ENCODE measurements at regions of chr20 and their contacts with region 1.

Region 1: GRCh38 chr20:44683263-44684046 is 31.7 kb upstream of the CCN5 start:
- DNase-seq: peak; percentile 67
- H3K4me3 Mint-ChIP-seq: no peak overlapping the region
- H3K27ac Mint-ChIP-seq: no peak overlapping the region
- H3K4me1 Mint-ChIP-seq: peaks cover 11% of the 10 kb centered on the region
- H3K27me3 Mint-ChIP-seq: peaks cover 3% of the 10 kb centered on the region

Region 2: DNA sequence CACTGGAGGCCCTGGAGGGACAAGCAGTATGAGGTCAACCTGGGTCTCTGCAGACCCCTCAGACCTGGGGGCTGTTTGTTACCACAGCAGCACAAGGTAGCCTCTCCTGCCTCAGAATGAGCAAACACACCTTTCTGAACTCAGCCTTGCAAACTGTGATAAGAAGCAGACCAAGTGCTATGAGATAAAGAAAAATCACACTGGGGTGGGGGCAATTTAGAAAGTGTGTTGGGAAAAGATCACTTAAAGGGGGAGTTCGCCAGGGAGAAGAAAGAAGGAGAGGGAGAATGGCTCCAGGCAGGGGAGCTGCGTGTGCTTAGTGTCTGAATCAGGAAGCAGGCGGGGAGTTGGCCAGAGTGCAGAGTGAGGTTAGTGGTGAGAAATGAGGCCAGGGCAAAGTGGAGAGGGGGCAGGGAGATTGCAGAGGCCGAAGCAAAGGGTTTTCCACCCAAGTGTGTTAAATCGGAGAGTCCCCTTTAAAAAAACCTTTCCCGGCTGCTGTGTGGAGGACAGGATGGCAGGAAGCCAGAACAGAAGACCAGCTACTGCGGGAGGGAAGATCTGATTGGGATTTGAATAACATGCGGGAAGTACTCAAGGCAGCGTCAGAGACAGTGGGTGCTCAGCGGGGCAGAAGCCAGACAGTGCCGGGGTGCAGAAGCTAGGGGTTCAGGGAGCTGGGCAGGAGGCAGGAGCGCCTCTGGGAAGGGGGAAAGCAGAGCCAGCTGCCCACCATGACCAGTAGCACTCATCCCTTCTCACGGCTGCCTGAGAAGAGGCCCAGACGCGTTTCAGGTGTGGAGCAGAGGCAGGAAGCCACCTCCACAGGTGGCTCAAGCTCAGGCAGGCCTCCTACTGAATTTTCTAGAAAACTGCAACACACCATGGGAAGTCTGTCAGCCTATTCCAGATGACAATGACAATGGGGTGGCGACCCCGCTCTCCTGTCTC is 41.0 kb before region 1 on chr20:
- CTCF ChIA-PET with region 1: interaction called, 26 read pairs
- DNase-seq: peak; percentile 39
- H3K4me3 Mint-ChIP-seq: peak overlapping the region; percentile 33
- H3K27ac Mint-ChIP-seq: peak overlapping the region; percentile 93
- H3K4me1 Mint-ChIP-seq: peaks cover 77% of the 10 kb centered on the region
- H3K27me3 Mint-ChIP-seq: no peaks in the 10 kb centered on the region

Region 3: DNA sequence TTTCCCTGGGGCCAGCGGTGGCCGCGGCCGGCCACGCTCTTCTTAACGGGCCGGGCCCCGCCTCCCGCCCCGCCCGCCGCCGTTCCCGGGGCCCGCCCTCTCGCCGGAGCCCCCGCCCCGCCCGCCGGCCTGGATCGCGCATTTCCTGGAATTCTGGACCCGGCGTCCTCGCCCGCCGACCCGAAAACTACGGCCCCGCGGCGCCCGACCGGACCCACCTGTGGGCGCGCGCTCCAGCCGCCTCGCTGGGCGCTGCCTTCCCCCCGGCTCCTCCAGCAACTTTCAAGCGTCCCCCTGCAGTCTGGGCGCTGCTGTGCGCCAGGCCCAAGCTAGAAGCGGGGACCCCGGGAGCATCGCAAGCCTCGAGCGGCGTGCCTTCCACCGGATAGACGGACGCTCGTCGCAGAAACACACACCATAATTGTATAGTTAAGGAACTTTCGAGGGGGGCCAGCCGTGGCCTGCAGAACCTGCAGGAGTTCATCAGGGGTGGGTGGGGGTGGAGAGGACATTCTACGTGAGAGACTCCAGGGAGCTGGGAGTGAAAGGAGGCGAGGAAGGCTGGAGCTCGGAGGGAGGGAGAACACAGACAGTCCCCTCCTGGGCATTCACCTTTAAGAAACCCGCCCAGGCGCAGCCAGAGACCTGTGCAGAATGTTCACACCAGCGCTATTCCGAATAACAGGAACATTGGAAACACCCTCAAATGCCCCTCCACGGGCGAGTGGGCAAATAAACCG is 31.6 kb before region 1 on chr20 and contains the start of gene ADA:
- CTCF ChIA-PET with region 1: interaction called, 26 read pairs
- DNase-seq: peak; percentile 63
- H3K4me3 Mint-ChIP-seq: peak within 1 kb of the TSS; percentile 83
- H3K27ac Mint-ChIP-seq: peak within 1 kb of the TSS; percentile 90
- H3K4me1 Mint-ChIP-seq: peaks cover 58% of the 10 kb centered on the region
- H3K27me3 Mint-ChIP-seq: no peaks in the 10 kb centered on the region

Region 4: GRCh38 chr20:44733341-44734069 is 50.0 kb after region 1 on chr20:
- CTCF ChIA-PET with region 1: interaction called, 98 read pairs
- DNase-seq: peak; percentile 77
- H3K4me3 Mint-ChIP-seq: no peak overlapping the region
- H3K27ac Mint-ChIP-seq: no peak overlapping the region
- H3K4me1 Mint-ChIP-seq: peaks cover 35% of the 10 kb centered on the region
- H3K27me3 Mint-ChIP-seq: peaks cover 6% of the 10 kb centered on the region

Region 5: GRCh38 chr20:44805979-44806620 is 122.6 kb after region 1 on chr20:
- CTCF ChIA-PET with region 1: no interaction called
- DNase-seq: no peak
- H3K4me3 Mint-ChIP-seq: no peak overlapping the region
- H3K27ac Mint-ChIP-seq: no peak overlapping the region
- H3K4me1 Mint-ChIP-seq: peaks cover 7% of the 10 kb centered on the region
- H3K27me3 Mint-ChIP-seq: peaks cover 73% of the 10 kb centered on the region

Measured in activated naive CD4-positive, alpha-beta T cell treated with anti-CD3 and anti-CD28 coated beads, Interleukin-2, amount 10 ng/mL, durations not matched to agents 7 days and 5 days (primary cell).